Right cardiac atrium (tissue), 5 donors: ENCODE measurements at regions of chr2 and their contacts with region 1.

Region 1: DNA sequence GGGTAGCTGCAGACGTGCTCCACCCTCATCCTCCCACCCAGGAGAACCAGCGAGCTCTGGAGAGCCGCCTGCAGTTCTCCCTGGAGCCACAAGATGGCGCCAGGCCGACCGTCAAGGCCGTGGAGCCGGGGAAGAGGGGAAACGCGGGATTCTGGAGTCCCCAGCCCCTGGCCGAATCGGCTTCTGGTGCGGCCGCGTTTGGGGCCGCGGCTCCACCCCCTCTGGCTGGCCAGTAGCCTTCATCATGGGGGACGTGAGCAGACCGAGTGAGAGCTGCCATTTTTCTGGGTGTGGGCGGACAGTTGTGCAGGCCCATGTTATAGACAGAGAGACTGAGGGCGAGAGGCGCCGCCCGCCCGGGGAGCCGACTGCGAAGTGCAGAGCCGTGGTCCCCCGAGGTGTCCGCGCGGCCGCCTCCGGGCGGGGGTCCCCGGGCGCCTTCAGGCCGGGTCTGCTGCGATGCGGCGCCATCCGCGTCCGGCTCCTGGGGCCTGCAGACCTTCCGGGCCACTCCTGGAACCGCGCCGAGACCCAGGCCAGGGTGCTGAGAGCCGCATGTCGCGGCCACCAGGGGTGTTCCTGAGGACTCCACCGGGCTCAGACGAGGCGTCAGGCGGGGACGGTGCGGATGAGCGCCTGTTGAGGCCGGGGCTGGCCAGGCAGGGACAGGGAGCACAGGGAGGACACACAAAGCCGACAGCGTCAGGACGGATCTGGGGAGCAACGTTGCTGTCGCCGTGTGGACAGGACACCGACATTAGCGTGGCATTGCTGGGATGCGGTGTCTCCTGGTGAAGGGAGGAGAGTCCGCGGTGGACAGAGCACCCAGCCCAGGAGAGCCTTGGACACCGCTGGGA is 418.2 kb upstream of the HS6ST1 start:
- DNase-seq: peak; percentile 84 to 95 (median 93)
- ATAC-seq: peak; percentile 80 to 87
- H3K4me3 ChIP-seq: peak overlapping the region; percentile 16
- H3K27ac ChIP-seq: no peak overlapping the region
- H3K4me1 ChIP-seq: no peaks in the 10 kb centered on the region
- H3K27me3 ChIP-seq: no peaks in the 10 kb centered on the region

Region 2: DNA sequence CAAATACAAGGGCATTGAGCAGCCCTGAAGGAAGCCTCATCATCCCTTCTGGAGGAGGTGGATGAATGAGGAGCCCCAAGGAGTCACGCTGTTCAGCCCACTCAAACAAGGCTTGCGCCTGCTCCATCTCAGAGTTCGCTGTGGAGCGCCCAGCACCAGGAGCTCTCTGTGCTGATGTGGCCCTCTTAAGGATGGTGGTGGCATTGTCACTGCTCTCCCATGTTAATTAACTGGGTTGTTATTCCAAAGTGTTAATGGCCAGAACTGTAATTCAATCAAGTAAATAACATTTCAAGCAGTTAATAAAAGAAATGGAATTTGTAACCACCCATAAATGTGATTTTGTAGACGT is 516.5 kb after region 1 on chr2:
- intact Hi-C with region 1: loop called in 1 of 4 experiments (anchors 10 kb)
- DNase-seq: peak in 2 of 3 donors; percentile 22 to 66
- ATAC-seq: peak; percentile 68 to 76
- H3K4me3 ChIP-seq: no peak overlapping the region
- H3K27ac ChIP-seq: no peak overlapping the region
- H3K4me1 ChIP-seq: no peaks in the 10 kb centered on the region
- H3K27me3 ChIP-seq: no peaks in the 10 kb centered on the region